HepG2 (cell line): ENCODE measurements at regions of chr14 and their contacts with region 1.

Region 1: GRCh38 chr14:75147423-75148071 is 20.7 kb upstream of the NEK9 start:
- DNase-seq: peak; percentile 97
- ATAC-seq: peak; percentile 98
- H3K4me3 ChIP-seq: peak overlapping the region in 1 of 3 experiments; percentile 3; a peak in 1 of 6 replicates
- H3K27ac ChIP-seq: peak overlapping the region; percentile 75
- H3K4me1 ChIP-seq: peaks cover 75% of the 10 kb centered on the region
- H3K27me3 ChIP-seq: no peaks in the 10 kb centered on the region
- CTCF ChIP-seq: peak; percentile 76
- EP300 ChIP-seq: 0 out of 4 replicates have a peak, but pooled peaks of 1 of the 2 experiments have one; percentile 39
- POLR2A ChIP-seq: peak in 1 of 2 experiments; percentile 42; a peak in 1 of 4 replicates
- RAD21 ChIP-seq: no peak

Region 2: DNA sequence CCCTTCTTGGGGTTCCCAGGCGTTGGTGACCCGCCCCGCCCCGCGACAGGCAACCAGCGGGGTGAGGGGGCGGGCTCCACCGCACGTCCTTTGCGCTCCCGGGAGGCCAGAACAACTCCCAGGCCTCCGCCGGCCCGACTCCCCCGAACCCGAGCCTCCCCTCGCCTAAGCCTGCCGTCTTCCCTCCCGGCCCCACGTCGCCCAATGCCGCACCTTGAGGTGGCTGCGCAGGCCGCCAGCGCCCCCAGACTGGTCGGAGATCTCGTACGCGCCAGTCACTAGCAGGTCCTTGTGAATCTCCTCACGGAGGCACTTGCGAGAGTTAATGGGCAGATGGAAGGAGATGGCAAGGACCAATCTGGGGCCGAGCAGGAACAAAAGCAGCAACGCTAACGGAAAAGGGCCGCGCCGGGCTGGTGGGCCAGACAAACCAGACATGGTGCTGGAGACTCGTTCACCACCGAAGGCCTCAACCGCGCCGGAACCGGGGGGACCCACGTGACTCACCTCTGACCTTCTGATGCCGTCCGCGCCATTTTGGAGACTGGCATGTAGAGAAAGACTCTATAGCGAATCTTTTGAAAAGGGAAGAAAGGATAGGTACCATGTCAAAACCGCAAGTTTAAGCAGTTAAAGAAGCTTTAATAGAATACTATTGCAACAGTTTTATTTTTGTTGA is 28.7 kb after region 1 on chr14 and contains the start of gene TMED10:
- CTCF ChIA-PET with region 1: no interaction called
- POLR2A ChIA-PET with region 1: no interaction called
- in situ Hi-C with region 1: no loop called
- intact Hi-C with region 1: loop called (anchors 1 kb)
- DNase-seq: peak; percentile 81
- ATAC-seq: peak; percentile 86
- H3K4me3 ChIP-seq: peak within 1 kb of the TSS; percentile 83 to 98 (median 93)
- H3K27ac ChIP-seq: peak within 1 kb of the TSS; percentile 99
- H3K4me1 ChIP-seq: peaks cover 38% of the 10 kb centered on the region
- H3K27me3 ChIP-seq: no peaks in the 10 kb centered on the region; a peak in 1 of 5 replicates
- CTCF ChIP-seq: peak; percentile 57
- EP300 ChIP-seq: no peak
- POLR2A ChIP-seq: peak; percentile 83 to 87
- RAD21 ChIP-seq: peak; percentile 42; the same call in 1 of the 2 replicates
- total RNA-seq, gene TMED10: 183 and 311 TPM in 2 replicates